Endothelial cell of umbilical vein (primary cell): ENCODE measurements at regions of chr18 and their contacts with region 1.

Region 1: GRCh38 chr18:56575819-56576663 is 62.4 kb downstream of the TXNL1 start:
- DNase-seq: peak; percentile 82
- H3K4me3 ChIP-seq: no peak overlapping the region
- H3K27ac ChIP-seq: no peak overlapping the region
- H3K4me1 ChIP-seq: peaks cover 25% of the 10 kb centered on the region
- H3K27me3 ChIP-seq: no peaks in the 10 kb centered on the region
- CTCF ChIP-seq: peak; percentile 29 to 33
- POLR2A ChIP-seq: no peak

Region 2: GRCh38 chr18:55234366-55235093 is 1341.5 kb before region 1 on chr18:
- CTCF ChIA-PET with region 1: interaction called, 43 read pairs
- POLR2A ChIA-PET with region 1: no interaction called
- dilution Hi-C with region 1: no loop called
- intact Hi-C with region 1: loop called (anchors 1 kb)
- DNase-seq: peak; percentile 82
- H3K4me3 ChIP-seq: no peak overlapping the region
- H3K27ac ChIP-seq: peak overlapping the region; percentile 61
- H3K4me1 ChIP-seq: peaks cover 22% of the 10 kb centered on the region
- H3K27me3 ChIP-seq: no peaks in the 10 kb centered on the region
- CTCF ChIP-seq: peak; percentile 63 to 69
- POLR2A ChIP-seq: no peak

Region 3: DNA sequence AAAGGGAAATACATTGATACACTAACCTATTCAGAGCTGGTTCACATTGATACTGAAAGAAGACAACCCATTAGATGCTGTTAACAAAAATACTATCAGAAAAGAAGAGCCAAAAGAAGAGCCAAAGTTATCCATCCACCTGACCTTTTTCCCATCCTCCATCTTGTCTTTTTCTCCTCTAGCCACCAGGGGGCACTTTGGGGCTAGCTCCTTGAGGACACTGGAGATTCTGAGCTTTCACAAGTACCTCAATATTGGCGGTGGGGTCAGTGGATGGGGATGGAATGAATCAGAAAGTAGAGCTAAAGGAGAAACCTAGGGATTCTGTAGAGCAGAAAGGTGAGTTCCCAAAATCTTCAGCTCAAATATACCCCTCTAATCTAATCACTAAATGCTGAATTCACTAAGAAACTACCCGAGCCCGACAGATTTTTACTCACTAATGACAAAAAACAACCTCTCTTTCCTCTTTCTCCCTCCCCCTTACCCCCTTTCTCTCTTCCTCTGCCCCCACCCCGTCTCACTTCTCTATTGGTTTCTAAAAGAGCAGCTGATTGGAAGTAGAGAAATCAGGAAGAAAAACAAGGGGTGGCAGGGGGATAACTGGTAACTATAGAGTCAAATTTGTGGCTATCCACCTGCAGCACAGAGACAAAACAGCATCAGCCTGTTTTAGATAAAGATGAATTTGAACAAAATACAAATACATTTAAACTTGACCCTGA is 1191.3 kb before region 1 on chr18:
- CTCF ChIA-PET with region 1: interaction called, 17 read pairs
- POLR2A ChIA-PET with region 1: no interaction called
- dilution Hi-C with region 1: no loop called
- intact Hi-C with region 1: loop called (anchors 2 kb)
- DNase-seq: peak; percentile 67
- H3K4me3 ChIP-seq: no peak overlapping the region
- H3K27ac ChIP-seq: no peak overlapping the region
- H3K4me1 ChIP-seq: peaks cover 39% of the 10 kb centered on the region
- H3K27me3 ChIP-seq: no peaks in the 10 kb centered on the region
- CTCF ChIP-seq: peak; percentile 69 to 74
- POLR2A ChIP-seq: no peak

Region 4: DNA sequence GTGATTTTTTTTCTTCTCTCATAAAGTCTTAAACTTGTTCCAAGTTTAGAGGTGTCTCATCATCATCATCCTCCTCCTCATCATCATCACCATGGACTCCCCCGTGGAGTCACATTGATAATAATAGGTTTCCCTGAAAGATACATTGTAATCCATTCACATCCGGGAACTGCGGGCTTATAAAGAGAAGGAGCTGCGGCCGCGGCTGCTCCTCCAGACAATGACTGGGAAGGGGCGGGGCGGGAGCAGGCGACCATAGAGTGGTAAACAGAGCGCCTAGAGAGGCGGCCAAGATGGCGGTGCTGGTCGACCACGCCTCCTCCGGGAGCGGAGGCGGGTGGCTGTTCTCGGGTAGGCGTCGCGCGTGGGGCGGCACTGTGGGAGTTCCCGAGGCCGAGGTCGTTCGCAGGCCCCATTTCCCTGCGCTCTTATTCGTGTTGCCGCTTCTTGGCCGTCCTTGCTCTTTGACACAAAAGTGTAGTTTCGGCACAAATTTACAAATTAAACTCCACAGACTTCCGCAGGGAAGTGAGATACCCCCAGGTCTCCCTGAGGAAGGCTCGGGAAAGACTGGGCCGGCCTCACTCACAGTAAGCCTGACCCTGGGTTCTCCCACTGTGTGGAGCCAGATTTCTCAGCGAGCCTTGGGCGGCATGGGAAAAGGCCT is 986.3 kb before region 1 on chr18:
- CTCF ChIA-PET with region 1: interaction called, 4 read pairs
- POLR2A ChIA-PET with region 1: no interaction called
- dilution Hi-C with region 1: no loop called
- intact Hi-C with region 1: loop called (anchors 1 kb)
- DNase-seq: peak; percentile 97
- H3K4me3 ChIP-seq: peak overlapping the region; percentile 87 to 100 (median 98)
- H3K27ac ChIP-seq: peak overlapping the region; percentile 96
- H3K4me1 ChIP-seq: peaks cover 23% of the 10 kb centered on the region
- H3K27me3 ChIP-seq: no peaks in the 10 kb centered on the region
- CTCF ChIP-seq: no peak
- POLR2A ChIP-seq: peak; percentile 81

Region 5: GRCh38 chr18:55988537-55988936 is 587.5 kb before region 1 on chr18:
- CTCF ChIA-PET with region 1: no interaction called
- POLR2A ChIA-PET with region 1: no interaction called
- dilution Hi-C with region 1: no loop called
- intact Hi-C with region 1: loop called (anchors 1 kb)
- DNase-seq: peak; percentile 94
- H3K4me3 ChIP-seq: no peak overlapping the region
- H3K27ac ChIP-seq: peak overlapping the region; percentile 81
- H3K4me1 ChIP-seq: peaks cover 10% of the 10 kb centered on the region
- H3K27me3 ChIP-seq: no peaks in the 10 kb centered on the region
- CTCF ChIP-seq: no peak
- POLR2A ChIP-seq: no peak

Region 6: GRCh38 chr18:56358608-56359280 is 217.3 kb before region 1 on chr18:
- CTCF ChIA-PET with region 1: interaction called, 9 read pairs
- POLR2A ChIA-PET with region 1: no interaction called
- dilution Hi-C with region 1: no loop called
- intact Hi-C with region 1: loop called (anchors 1 kb)
- DNase-seq: no peak
- H3K4me3 ChIP-seq: no peak overlapping the region
- H3K27ac ChIP-seq: no peak overlapping the region
- H3K4me1 ChIP-seq: no peaks in the 10 kb centered on the region
- H3K27me3 ChIP-seq: no peaks in the 10 kb centered on the region
- CTCF ChIP-seq: no peak
- POLR2A ChIP-seq: no peak